ENCODE measurements at regions of chr14 and their contacts with region 1.

Region 1: DNA sequence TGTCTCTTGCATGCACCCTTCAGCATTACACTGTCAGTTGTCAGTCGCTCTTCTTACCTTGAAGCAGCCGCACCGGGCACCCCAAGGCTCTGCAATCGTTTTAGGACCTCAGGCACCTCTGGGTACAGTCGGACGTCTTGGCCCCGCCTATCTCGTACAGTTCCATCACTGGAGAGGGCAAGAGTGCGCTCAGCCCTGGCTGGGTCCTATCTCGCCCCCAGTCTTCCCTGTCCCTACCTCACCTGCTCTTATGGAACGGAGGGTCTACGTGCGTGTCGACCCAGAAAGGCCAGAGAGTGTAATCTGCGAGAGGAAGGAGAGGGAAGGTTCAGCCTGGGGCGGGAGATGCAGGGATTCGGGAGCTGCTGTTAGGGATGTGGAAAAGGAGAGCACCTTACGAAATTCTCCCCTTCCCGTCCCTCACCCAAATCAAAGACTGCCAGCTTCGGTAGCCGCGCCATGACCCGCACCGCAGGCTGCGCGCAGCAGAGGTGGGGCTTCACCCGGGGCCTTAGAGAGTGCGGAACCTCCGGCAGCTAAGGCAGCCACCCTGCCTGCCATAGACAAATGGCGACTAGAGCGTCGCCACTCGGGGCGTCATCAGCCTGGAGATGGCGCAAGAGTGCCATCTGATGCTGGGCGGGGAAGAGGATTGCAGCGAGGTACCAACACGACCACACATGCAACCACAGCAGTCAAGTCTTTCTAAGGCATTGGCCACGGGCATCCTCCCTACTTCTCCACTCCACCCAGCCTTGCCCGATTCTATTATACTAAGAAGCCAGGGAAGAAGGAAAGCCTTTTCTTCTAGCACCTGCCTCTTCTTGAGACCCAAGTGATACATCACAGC is at the start of gene MDP1:
- DNase-seq: peak; percentile 91
- H3K4me3 ChIP-seq: peak within 1 kb of the TSS; percentile 57 to 69 (median 64)
- H3K27ac ChIP-seq: peak within 1 kb of the TSS; percentile 61
- H3K4me1 ChIP-seq: peaks cover 11% of the 10 kb centered on the region
- H3K27me3 ChIP-seq: no peaks in the 10 kb centered on the region
- CTCF ChIP-seq: peak; percentile 84 to 86
- POLR2A ChIP-seq: peak; percentile 88
- total RNA-seq, gene MDP1: 8.1 and 9.9 TPM in 2 replicates

Region 2: DNA sequence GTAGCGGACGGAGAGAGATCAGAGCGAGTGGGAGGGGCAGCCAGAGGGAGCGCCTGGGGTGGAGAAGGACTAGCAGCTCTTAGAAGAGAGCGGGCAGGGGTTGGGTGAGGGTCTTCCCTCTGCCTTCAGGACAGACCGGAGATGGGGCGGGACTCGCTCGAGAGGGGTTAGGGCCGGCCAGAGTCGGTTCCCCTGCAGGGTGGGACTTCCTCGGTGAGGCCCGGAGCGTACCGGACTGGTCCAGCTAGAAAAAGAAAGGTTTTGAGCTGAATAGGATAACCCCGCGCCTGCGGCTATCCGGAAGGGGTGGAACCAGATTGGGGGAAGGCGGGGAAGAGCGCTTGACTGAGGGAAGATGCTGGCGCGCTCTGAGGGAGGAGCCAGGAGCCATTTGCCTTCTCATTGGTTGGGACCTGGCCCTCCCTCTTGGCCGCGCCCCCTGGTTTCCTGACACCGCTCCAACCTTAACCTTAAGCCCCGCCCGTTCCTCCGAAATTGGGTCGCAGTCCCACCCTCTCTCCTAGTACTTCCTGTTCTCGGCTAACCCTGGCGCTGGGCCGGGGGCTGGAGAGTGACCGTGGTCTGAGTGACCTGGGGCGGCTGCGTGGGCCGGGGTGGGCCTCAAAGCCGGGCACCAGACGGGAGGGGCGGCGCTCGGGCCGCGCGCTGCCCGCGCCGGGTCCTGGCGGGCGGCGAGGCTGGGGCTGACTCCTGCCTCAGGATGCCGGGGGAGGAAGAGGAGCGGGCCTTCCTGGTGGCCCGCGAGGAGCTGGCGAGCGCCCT is 68.6 kb before region 1 on chr14 and contains the start of gene RNF31:
- CTCF ChIA-PET with region 1: no interaction called
- POLR2A ChIA-PET with region 1: interaction called, 5 read pairs
- dilution Hi-C with region 1: no loop called
- intact Hi-C with region 1: loop called (anchors 1 kb)
- DNase-seq: peak; percentile 97
- H3K4me3 ChIP-seq: peak within 1 kb of the TSS; percentile 59 to 86 (median 79)
- H3K27ac ChIP-seq: peak within 1 kb of the TSS; percentile 52
- H3K4me1 ChIP-seq: peaks cover 17% of the 10 kb centered on the region
- H3K27me3 ChIP-seq: no peaks in the 10 kb centered on the region
- CTCF ChIP-seq: no peak
- POLR2A ChIP-seq: peak; percentile 75
- total RNA-seq, gene RNF31: 66.5 and 69.7 TPM in 2 replicates

Region 3: DNA sequence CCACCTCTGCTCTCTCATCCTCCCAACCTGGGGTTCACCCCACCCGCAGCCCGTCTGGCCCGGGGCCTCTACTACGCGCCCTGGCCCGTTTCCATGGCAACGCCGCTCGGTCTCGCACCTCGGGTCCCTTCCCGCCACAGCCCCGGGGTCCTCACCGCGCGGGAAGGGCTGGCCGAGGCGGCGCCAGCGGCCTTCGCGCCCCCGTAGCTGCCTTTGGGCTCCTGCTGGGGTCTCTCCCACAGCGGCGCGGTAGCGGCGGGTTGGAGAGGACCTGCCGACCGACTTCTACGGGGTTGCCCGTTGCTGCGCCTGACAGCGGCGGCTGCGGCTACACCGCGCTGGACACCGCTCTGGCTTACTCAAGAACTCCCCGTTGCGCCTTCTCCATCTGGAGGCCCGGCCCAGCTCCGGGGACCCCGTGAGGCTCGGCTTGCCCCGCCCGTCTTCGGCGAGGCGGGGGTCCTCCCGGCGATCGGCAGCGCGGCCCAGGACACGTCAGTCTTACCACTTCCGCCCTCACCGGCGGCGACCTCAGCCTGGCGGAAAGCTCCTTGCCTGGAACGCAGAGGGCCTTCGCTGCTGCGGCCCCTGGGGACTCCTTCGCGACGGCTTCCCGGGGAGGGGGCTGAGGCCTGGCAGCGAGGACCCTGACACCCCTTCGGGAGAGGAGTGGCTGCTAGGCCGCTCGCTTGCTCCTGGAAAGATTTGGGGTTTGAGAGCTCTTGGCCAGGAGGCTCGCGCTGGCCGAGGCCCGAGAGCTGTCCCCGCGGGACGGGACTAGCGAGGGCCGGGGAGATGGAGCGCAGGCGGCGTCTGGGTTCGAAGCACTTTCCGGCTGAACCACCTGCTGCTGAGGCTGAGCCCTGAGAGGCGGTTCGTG is 20.3 kb before region 1 on chr14 and contains the start of gene TM9SF1:
- CTCF ChIA-PET with region 1: interaction called, 11 read pairs
- POLR2A ChIA-PET with region 1: interaction called, 14 read pairs
- dilution Hi-C with region 1: no loop called
- intact Hi-C with region 1: loop called (anchors 1 kb)
- DNase-seq: peak; percentile 93
- H3K4me3 ChIP-seq: peak within 1 kb of the TSS; percentile 36 to 82 (median 69)
- H3K27ac ChIP-seq: peak within 1 kb of the TSS; percentile 93
- H3K4me1 ChIP-seq: peaks cover 16% of the 10 kb centered on the region
- H3K27me3 ChIP-seq: no peaks in the 10 kb centered on the region
- CTCF ChIP-seq: no peak
- POLR2A ChIP-seq: no peak
- total RNA-seq, gene TM9SF1: 58.5 and 60.7 TPM in 2 replicates

Region 4: DNA sequence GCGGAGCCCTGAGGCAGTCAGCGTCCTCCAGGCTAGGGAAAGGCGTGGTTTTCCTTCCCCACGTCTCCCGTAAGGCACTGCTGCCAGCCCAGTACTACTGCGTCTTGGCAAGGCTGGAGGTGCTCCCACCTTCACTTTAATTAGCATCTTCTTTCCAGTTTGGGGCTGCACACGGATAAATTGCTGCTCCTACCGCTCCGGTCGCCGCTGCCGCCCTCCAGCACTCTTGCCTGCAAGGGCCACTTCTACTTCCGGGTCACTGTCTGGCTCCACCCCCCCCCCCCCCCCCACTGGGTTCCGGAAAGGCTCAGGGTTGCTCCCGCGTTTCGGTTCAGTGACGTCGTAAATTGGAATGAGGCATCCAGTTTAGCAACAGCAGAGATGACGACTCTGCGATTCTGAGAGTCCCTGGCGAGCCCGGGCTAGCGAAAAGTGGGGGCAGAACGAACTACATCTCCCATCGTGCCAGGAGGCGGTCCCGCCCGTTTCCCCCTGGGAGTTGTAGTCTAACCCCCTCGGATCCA is 16.5 kb after region 1 on chr14 and contains the start of gene NEDD8:
- CTCF ChIA-PET with region 1: interaction called, 20 read pairs
- POLR2A ChIA-PET with region 1: interaction called, 5 read pairs
- dilution Hi-C with region 1: no loop called
- intact Hi-C with region 1: loop called (anchors 1 kb)
- DNase-seq: peak; percentile 94
- H3K4me3 ChIP-seq: peak within 1 kb of the TSS; percentile 63 to 87 (median 67)
- H3K27ac ChIP-seq: peak within 1 kb of the TSS; percentile 88
- H3K4me1 ChIP-seq: peaks cover 31% of the 10 kb centered on the region
- H3K27me3 ChIP-seq: no peaks in the 10 kb centered on the region
- CTCF ChIP-seq: no peak
- POLR2A ChIP-seq: peak; percentile 40
- total RNA-seq, gene NEDD8: 243 and 261 TPM in 2 replicates

Region 5: GRCh38 chr14:24271134-24271833 is 55.6 kb after region 1 on chr14 and contains the start of gene RABGGTA:
- CTCF ChIA-PET with region 1: interaction called, 12 read pairs
- POLR2A ChIA-PET with region 1: no interaction called
- dilution Hi-C with region 1: no loop called
- intact Hi-C with region 1: loop called (anchors 1 kb)
- DNase-seq: peak; percentile 79
- H3K4me3 ChIP-seq: peak within 1 kb of the TSS; percentile 58 to 77 (median 65)
- H3K27ac ChIP-seq: peak within 1 kb of the TSS; percentile 92
- H3K4me1 ChIP-seq: peaks cover 9% of the 10 kb centered on the region
- H3K27me3 ChIP-seq: no peaks in the 10 kb centered on the region
- CTCF ChIP-seq: peak; percentile 74 to 85
- POLR2A ChIP-seq: peak; percentile 81
- total RNA-seq, gene RABGGTA: 29.3 and 29.5 TPM in 2 replicates

Region 6: DNA sequence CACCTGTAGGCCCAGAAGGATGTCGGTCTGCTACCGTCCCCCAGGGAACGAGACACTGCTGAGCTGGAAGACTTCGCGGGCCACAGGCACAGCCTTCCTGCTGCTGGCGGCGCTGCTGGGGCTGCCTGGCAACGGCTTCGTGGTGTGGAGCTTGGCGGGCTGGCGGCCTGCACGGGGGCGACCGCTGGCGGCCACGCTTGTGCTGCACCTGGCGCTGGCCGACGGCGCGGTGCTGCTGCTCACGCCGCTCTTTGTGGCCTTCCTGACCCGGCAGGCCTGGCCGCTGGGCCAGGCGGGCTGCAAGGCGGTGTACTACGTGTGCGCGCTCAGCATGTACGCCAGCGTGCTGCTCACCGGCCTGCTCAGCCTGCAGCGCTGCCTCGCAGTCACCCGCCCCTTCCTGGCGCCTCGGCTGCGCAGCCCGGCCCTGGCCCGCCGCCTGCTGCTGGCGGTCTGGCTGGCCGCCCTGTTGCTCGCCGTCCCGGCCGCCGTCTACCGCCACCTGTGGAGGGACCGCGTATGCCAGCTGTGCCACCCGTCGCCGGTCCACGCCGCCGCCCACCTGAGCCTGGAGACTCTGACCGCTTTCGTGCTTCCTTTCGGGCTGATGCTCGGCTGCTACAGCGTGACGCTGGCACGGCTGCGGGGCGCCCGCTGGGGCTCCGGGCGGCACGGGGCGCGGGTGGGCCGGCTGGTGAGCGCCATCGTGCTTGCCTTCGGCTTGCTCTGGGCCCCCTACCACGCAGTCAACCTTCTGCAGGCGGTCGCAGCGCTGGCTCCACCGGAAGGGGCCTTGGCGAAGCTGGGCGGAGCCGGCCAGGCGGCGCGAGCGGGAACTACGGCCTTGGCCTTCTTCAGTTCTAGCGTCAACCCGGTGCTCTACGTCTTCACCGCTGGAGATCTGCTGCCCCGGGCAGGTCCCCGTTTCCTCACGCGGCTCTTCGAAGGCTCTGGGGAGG is 95.2 kb after region 1 on chr14 and contains the start of gene LTB4R:
- CTCF ChIA-PET with region 1: interaction called, 11 read pairs
- POLR2A ChIA-PET with region 1: interaction called, 3 read pairs
- dilution Hi-C with region 1: no loop called
- intact Hi-C with region 1: no loop called
- DNase-seq: peak; percentile 88
- H3K4me3 ChIP-seq: peak within 1 kb of the TSS in 1 of 3 experiments; percentile 19
- H3K27ac ChIP-seq: peak within 1 kb of the TSS; percentile 91
- H3K4me1 ChIP-seq: peaks cover 60% of the 10 kb centered on the region
- H3K27me3 ChIP-seq: no peaks in the 10 kb centered on the region
- CTCF ChIP-seq: peak; percentile 20 to 53
- POLR2A ChIP-seq: peak; percentile 34
- total RNA-seq, gene LTB4R: 6.2 and 10.5 TPM in 2 replicates

Measured in endothelial cell of umbilical vein (primary cell).